H1 (cell line): ENCODE measurements at regions of chr4 and their contacts with region 1.

Region 1: DNA sequence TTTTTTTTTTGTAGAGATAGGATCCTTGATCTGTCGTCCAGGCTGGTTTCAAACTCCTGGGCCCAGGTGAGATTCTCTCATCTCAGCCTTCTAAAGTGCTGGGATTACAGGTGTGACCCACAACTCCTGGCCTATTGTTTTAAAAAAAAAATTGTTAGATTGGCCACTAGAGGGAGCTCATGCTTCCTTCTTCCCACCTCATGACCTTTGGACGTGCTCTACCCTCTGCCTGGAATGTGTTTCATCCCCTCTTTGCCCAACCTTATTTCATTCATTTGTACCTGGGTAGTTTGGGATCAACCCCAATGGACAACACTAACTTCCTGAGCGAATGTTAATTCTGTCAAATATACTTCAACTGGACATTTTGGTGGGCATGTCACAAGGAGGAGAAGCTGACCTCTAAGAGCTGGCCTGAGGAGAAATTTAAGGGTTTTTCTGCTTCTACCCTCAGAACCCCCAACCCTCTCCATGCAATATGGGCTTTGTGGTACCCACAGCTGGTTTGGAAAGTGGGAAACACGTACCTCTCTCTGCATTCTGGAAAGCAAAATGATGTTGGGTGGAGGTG is 6.4 kb downstream of the PPEF2 start:
- DNase-seq: no peak
- H3K4me3 ChIP-seq: no peak overlapping the region
- H3K27ac ChIP-seq: no peak overlapping the region
- H3K4me1 ChIP-seq: no peaks in the 10 kb centered on the region
- H3K27me3 ChIP-seq: no peaks in the 10 kb centered on the region
- CTCF ChIP-seq: peak; percentile 17 to 71 (median 64); a peak in 3 of 4 replicates
- EP300 ChIP-seq: no peak
- POLR2A ChIP-seq: no peak
- RAD21 ChIP-seq: peak; percentile 69 to 72

Region 2: DNA sequence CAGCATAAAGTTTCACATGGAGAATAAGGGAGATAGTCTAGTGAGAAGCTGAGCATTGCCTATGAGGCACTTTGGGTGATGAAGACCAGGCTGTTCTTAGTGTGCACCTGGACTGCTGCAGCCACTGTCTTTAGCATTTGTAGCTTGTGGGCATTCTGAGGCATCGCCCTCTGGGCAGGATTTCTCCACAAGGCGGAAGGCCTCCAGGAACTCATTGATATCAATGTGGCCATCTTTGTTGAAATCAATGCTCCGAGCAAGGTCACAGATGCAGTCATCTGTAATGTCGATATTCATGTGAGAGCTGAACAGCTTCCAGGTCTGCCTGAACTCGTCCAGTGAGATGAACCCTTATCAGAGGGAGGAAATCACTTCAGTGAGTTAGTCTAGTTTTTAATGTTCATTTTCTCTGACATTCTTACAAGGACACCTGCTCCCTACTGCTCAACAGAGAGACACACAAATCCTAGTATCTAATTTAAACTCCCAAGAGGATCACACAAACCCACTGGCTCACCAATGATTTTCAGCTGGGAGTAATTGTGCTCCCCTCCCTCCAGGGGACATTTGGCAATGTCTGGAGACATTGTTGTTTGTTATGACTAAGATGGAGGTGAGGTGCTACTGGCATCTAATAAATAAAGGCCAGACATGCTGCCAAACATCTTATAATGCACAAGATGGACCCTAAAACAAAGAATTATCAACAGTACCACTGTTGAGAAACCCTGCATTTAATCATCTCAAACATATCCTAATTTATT is 35.1 kb before region 1 on chr4:
- CTCF ChIA-PET with region 1: interaction called, 13 read pairs
- POLR2A ChIA-PET with region 1: no interaction called
- DNase-seq: no peak
- H3K4me3 ChIP-seq: no peak overlapping the region
- H3K27ac ChIP-seq: no peak overlapping the region
- H3K4me1 ChIP-seq: no peaks in the 10 kb centered on the region
- H3K27me3 ChIP-seq: no peaks in the 10 kb centered on the region
- CTCF ChIP-seq: no peak
- EP300 ChIP-seq: no peak
- POLR2A ChIP-seq: no peak
- RAD21 ChIP-seq: no peak

Region 3: GRCh38 chr4:75876218-75876617 is 19.6 kb before region 1 on chr4:
- CTCF ChIA-PET with region 1: interaction called, 27 read pairs
- POLR2A ChIA-PET with region 1: no interaction called
- DNase-seq: peak in 1 of 2 experiments; percentile 42
- H3K4me3 ChIP-seq: no peak overlapping the region
- H3K27ac ChIP-seq: no peak overlapping the region
- H3K4me1 ChIP-seq: peaks cover 0 to 4% (median 3%) of the 10 kb centered on the region in 4 experiments; a peak in 3 of 7 replicates
- H3K27me3 ChIP-seq: no peaks in the 10 kb centered on the region
- CTCF ChIP-seq: no peak
- EP300 ChIP-seq: no peak
- POLR2A ChIP-seq: no peak
- RAD21 ChIP-seq: no peak

Region 4: GRCh38 chr4:75908555-75908954 is 12.7 kb after region 1 on chr4:
- CTCF ChIA-PET with region 1: interaction called, 144 read pairs
- POLR2A ChIA-PET with region 1: interaction called, 4 read pairs
- DNase-seq: no peak
- H3K4me3 ChIP-seq: no peak overlapping the region
- H3K27ac ChIP-seq: no peak overlapping the region
- H3K4me1 ChIP-seq: peaks cover 0 to 4% (median 0%) of the 10 kb centered on the region in 4 experiments; a peak in 1 of 7 replicates
- H3K27me3 ChIP-seq: no peaks in the 10 kb centered on the region
- CTCF ChIP-seq: no peak
- EP300 ChIP-seq: no peak
- POLR2A ChIP-seq: no peak
- RAD21 ChIP-seq: no peak

Region 5: GRCh38 chr4:75940692-75941253 is 44.9 kb after region 1 on chr4 and contains the start of gene NAAA:
- CTCF ChIA-PET with region 1: interaction called, 57 read pairs
- POLR2A ChIA-PET with region 1: interaction called, 9 read pairs
- DNase-seq: peak; percentile 75 to 92
- H3K4me3 ChIP-seq: peak within 1 kb of the TSS; percentile 69 to 85 (median 74)
- H3K27ac ChIP-seq: no peak within 1 kb of the TSS
- H3K4me1 ChIP-seq: peaks cover 0 to 3% (median under 1%) of the 10 kb centered on the region in 4 experiments; a peak in 2 of 7 replicates
- H3K27me3 ChIP-seq: peaks cover 0 to 3% (median 0%) of the 10 kb centered on the region in 4 experiments; a peak in 1 of 7 replicates
- CTCF ChIP-seq: peak; percentile 42 to 66 (median 64)
- EP300 ChIP-seq: no peak
- POLR2A ChIP-seq: peak in 1 of 2 experiments; percentile 59; a peak in 1 of 3 replicates
- RAD21 ChIP-seq: peak; percentile 30 to 48; a peak in 3 of 4 replicates
- total RNA-seq, gene NAAA: 9.4 and 13.0 TPM in 2 replicates

Region 6: GRCh38 chr4:76087007-76087769 is 191.4 kb after region 1 on chr4:
- CTCF ChIA-PET with region 1: interaction called, 32 read pairs
- POLR2A ChIA-PET with region 1: no interaction called
- DNase-seq: peak; percentile 59 to 64
- H3K4me3 ChIP-seq: peak overlapping the region in 1 of 4 experiments; percentile 34; a peak in 1 of 8 replicates
- H3K27ac ChIP-seq: no peak overlapping the region
- H3K4me1 ChIP-seq: no peaks in the 10 kb centered on the region
- H3K27me3 ChIP-seq: no peaks in the 10 kb centered on the region
- CTCF ChIP-seq: peak; percentile 22 to 80 (median 67)
- EP300 ChIP-seq: no peak
- POLR2A ChIP-seq: no peak
- RAD21 ChIP-seq: peak; percentile 88 to 90